ENCODE measurements at regions of chr22 and their contacts with region 1.

Region 1: GRCh38 chr22:22848364-22848866 is 39.2 kb upstream of the IGLL5 start:
- DNase-seq: peak; percentile 40
- H3K4me3 ChIP-seq: no peak overlapping the region
- H3K27ac ChIP-seq: no peak overlapping the region
- H3K4me1 ChIP-seq: no peaks in the 10 kb centered on the region
- H3K27me3 ChIP-seq: peaks cover 3 to 25% of the 10 kb centered on the region in 2 experiments
- CTCF ChIP-seq: peak; percentile 90 to 93
- POLR2A ChIP-seq: no peak

Region 2: GRCh38 chr22:22578702-22579424 is 269.6 kb before region 1 on chr22:
- CTCF ChIA-PET with region 1: no interaction called
- POLR2A ChIA-PET with region 1: no interaction called
- dilution Hi-C with region 1: no loop called
- intact Hi-C with region 1: no loop called
- DNase-seq: no peak
- H3K4me3 ChIP-seq: no peak overlapping the region
- H3K27ac ChIP-seq: no peak overlapping the region
- H3K4me1 ChIP-seq: no peaks in the 10 kb centered on the region
- H3K27me3 ChIP-seq: peaks cover 7 to 17% of the 10 kb centered on the region in 2 experiments
- CTCF ChIP-seq: no peak
- POLR2A ChIP-seq: no peak

Region 3: DNA sequence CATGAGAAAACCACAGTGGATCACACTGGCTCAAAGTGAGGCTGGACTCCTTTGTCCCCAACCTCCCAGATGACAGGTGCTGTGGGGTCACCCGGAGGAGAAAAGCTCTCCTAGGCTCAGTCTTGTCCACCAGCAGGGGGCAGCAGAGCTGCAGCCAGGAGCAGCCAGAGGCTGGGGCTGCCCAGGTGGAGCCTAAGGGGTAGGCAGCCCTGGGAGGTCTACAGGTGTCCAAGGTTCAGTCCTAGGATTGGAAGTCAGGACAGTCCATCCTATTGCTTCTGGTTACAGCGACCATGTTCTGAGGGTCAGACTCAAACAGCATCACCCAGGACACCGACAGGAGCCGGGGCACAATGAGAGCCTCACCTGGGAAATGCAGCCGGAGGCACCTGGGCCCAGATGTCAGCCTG is 38.4 kb before region 1 on chr22:
- CTCF ChIA-PET with region 1: interaction called, 11 read pairs
- POLR2A ChIA-PET with region 1: no interaction called
- dilution Hi-C with region 1: no loop called
- intact Hi-C with region 1: no loop called
- DNase-seq: peak; percentile 7
- H3K4me3 ChIP-seq: no peak overlapping the region
- H3K27ac ChIP-seq: no peak overlapping the region
- H3K4me1 ChIP-seq: no peaks in the 10 kb centered on the region
- H3K27me3 ChIP-seq: peaks cover 8 to 16% of the 10 kb centered on the region in 2 experiments
- CTCF ChIP-seq: peak; percentile 80 to 82
- POLR2A ChIP-seq: no peak

Region 4: GRCh38 chr22:22863001-22863400 is 14.6 kb after region 1 on chr22:
- CTCF ChIA-PET with region 1: interaction called, 21 read pairs
- POLR2A ChIA-PET with region 1: no interaction called
- dilution Hi-C with region 1: no loop called
- intact Hi-C with region 1: no loop called
- DNase-seq: no peak
- H3K4me3 ChIP-seq: no peak overlapping the region
- H3K27ac ChIP-seq: no peak overlapping the region
- H3K4me1 ChIP-seq: no peaks in the 10 kb centered on the region
- H3K27me3 ChIP-seq: peaks cover 5 to 8% of the 10 kb centered on the region in 2 experiments
- CTCF ChIP-seq: no peak
- POLR2A ChIP-seq: no peak

Region 5: DNA sequence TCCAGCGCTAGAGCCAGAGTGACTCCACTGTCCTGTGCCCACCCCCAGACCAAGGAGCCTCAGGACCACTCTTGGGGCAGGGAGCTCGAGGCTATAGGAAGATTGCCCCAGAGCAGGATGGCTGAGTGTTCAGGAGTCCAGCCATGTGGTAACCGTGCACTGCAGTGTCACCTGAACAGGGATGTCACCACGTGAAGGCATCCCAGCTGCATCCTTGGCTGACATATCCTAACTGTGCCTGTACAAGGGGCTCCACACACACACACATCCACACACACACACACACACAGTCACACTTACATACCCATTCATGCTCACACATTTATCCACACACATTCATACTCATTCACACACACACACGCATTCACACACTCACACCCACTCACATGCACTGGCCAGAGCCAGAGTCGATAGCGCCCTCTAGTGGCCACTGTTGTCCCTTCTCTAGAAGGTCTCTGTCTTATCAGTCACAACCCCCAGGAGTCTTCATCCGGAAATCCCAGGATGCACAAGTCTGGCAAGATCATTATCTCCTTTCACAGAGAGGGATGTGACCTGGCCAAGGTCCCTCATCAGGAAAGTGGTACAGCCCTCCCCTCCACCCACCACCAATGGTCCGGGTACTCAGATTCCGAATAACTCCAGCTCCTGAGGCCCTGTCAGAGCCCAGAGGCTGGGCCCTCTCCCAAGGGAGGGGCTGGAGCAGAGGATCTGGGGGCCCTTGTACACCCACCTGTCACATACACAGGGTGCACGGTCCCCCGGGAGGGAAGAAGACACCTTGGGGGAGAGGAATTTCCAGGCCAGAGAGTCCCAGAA is 94.3 kb after region 1 on chr22:
- CTCF ChIA-PET with region 1: interaction called, 10 read pairs
- POLR2A ChIA-PET with region 1: no interaction called
- dilution Hi-C with region 1: no loop called
- intact Hi-C with region 1: no loop called
- DNase-seq: peak; percentile 41
- H3K4me3 ChIP-seq: no peak overlapping the region
- H3K27ac ChIP-seq: no peak overlapping the region
- H3K4me1 ChIP-seq: no peaks in the 10 kb centered on the region
- H3K27me3 ChIP-seq: no peaks in the 10 kb centered on the region
- CTCF ChIP-seq: peak; percentile 81 to 83
- POLR2A ChIP-seq: no peak

Region 6: DNA sequence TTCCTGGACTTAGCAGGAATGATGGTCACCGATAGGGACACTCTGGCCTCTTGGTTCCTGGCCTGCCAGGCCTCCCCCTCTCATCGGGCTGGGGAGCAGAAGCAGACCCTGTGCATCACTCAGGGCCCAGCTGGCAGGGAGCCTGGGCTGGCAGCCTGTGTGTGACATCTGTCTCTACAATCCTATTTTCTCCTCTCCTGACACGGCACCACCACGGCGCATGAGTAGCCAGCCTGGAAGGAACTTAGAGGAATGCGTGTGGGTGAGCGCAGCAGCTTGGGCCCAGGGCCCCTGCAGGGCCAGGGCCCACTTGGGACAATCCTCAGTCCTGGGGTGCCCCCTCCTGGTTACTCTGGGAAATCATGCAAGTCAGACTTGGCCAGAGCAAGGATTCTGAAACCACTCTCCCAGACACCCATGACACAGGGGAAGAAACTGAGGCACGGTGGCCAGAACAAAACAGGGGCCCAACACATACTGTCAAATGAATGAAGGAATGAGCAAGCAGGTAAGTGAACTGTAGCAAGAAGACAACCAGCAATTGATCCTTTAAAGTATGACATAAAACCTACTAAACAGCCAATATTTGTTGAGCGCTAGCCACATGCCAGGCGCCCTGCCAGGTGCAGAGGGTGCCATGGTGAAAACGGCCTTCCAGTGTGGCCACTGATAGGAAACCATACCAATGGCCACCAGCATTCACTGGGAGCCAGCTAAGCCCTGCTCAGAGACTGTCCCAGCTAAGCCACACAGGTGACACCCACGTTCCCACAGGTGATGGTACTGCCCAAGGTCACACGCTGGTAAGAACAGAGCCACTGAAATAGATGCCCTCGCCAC is 280.1 kb after region 1 on chr22:
- CTCF ChIA-PET with region 1: interaction called, 8 read pairs
- POLR2A ChIA-PET with region 1: no interaction called
- dilution Hi-C with region 1: no loop called
- intact Hi-C with region 1: loop called (anchors 1 kb)
- DNase-seq: peak; percentile 64
- H3K4me3 ChIP-seq: no peak overlapping the region
- H3K27ac ChIP-seq: no peak overlapping the region
- H3K4me1 ChIP-seq: no peaks in the 10 kb centered on the region
- H3K27me3 ChIP-seq: peaks cover 3 to 4% of the 10 kb centered on the region in 2 experiments
- CTCF ChIP-seq: peak; percentile 70 to 76
- POLR2A ChIP-seq: no peak

Measured in endothelial cell of umbilical vein (primary cell).